ENCODE measurements at regions of chr12 and their contacts with region 1.

Region 1: GRCh38 chr12:12266873-12267741 is at the start of gene LRP6:
- DNase-seq: peak; percentile 92
- H3K4me3 Mint-ChIP-seq: peak within 1 kb of the TSS; percentile 94
- H3K27ac Mint-ChIP-seq: peak within 1 kb of the TSS; percentile 99
- H3K4me1 Mint-ChIP-seq: peaks cover 18% of the 10 kb centered on the region
- H3K27me3 Mint-ChIP-seq: no peaks in the 10 kb centered on the region
- CTCF ChIP-seq: no peak
- total RNA-seq, gene LRP6: 24.9 and 27.6 TPM in 2 replicates

Region 2: GRCh38 chr12:11981121-11981733 is 285.9 kb before region 1 on chr12:
- CTCF ChIA-PET with region 1: no interaction called
- POLR2A ChIA-PET with region 1: no interaction called
- intact Hi-C with region 1: no loop called
- DNase-seq: no peak
- H3K4me3 Mint-ChIP-seq: no peak overlapping the region
- H3K27ac Mint-ChIP-seq: no peak overlapping the region
- H3K4me1 Mint-ChIP-seq: peaks cover 5% of the 10 kb centered on the region
- H3K27me3 Mint-ChIP-seq: no peaks in the 10 kb centered on the region
- CTCF ChIP-seq: no peak

Region 3: GRCh38 chr12:12123036-12123604 is 144.0 kb before region 1 on chr12:
- CTCF ChIA-PET with region 1: no interaction called
- POLR2A ChIA-PET with region 1: interaction called, 5 read pairs
- intact Hi-C with region 1: loop called (anchors 10 kb)
- DNase-seq: no peak
- H3K4me3 Mint-ChIP-seq: no peak overlapping the region
- H3K27ac Mint-ChIP-seq: no peak overlapping the region
- H3K4me1 Mint-ChIP-seq: no peaks in the 10 kb centered on the region
- H3K27me3 Mint-ChIP-seq: no peaks in the 10 kb centered on the region
- CTCF ChIP-seq: no peak

Region 4: DNA sequence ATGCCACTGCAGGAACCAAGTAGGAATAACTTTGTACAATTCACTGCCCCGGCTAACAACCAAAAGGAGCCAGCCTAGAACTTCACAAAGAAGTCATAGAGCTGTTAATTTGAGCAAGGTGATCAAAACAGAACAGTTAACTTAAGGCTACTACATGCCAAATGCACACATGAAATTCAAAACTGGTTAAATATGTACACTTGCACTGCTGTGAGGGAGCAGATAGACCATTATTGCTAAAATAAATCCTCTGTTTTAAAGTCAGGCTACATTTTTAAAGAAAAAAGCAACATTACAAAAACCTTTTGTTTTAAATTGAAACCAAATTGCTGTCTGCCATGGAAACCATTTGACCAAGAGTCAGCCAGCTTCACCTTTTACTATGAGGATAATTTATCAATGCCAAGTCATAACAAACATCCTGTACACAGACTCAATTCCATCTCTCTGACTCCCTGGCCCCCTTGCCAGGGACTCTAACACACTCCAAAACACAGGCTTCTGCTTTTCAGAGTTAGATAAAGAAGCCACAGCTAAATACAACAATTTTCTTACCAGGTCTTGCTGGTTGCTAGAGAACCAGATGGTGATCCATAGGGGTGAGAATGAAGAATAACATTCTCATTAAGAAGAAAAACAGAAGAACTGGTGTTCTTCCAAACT is 84.3 kb before region 1 on chr12:
- CTCF ChIA-PET with region 1: no interaction called
- POLR2A ChIA-PET with region 1: interaction called, 13 read pairs
- intact Hi-C with region 1: no loop called
- DNase-seq: no peak
- H3K4me3 Mint-ChIP-seq: no peak overlapping the region
- H3K27ac Mint-ChIP-seq: no peak overlapping the region
- H3K4me1 Mint-ChIP-seq: peaks cover 14% of the 10 kb centered on the region
- H3K27me3 Mint-ChIP-seq: no peaks in the 10 kb centered on the region
- CTCF ChIP-seq: no peak

Region 5: DNA sequence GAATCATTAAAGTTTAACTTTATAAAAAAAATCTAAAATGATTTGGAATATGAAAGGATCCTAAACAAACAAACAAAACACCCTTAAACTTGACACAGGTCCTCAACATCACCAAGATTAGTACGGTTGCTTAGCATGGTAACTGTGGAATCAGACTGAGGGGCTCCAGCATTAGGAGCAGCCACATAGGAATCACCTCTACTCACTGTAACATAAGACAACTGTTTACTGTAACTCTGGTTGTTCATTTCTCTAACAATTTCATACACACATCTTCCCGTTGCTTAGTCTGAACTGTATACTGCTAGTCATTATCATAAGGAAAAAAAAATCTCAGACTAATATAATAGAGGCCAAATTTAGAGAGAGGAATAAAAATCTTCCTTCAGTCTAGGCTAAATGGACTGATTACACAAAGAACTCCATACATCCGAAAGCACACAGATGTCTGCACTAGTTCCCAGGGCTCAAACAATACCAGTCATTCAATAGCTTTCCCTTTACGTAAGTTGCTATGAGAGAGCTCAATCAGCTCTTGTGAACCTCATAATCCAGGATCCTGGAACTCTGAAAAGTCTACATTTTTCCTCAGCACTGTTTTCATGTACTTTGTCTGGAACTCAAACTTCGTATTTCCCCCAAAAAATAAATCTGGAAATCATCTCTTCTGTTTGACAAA is 26.3 kb before region 1 on chr12:
- CTCF ChIA-PET with region 1: interaction called, 7 read pairs
- POLR2A ChIA-PET with region 1: interaction called, 29 read pairs
- intact Hi-C with region 1: no loop called
- DNase-seq: no peak
- H3K4me3 Mint-ChIP-seq: no peak overlapping the region
- H3K27ac Mint-ChIP-seq: no peak overlapping the region
- H3K4me1 Mint-ChIP-seq: peaks cover 17% of the 10 kb centered on the region
- H3K27me3 Mint-ChIP-seq: no peaks in the 10 kb centered on the region
- CTCF ChIP-seq: no peak

Region 6: GRCh38 chr12:12327802-12328201 is 60.7 kb after region 1 on chr12:
- CTCF ChIA-PET with region 1: interaction called, 6 read pairs
- POLR2A ChIA-PET with region 1: interaction called, 3 read pairs
- intact Hi-C with region 1: loop called (anchors 5 kb)
- DNase-seq: peak; percentile 66
- H3K4me3 Mint-ChIP-seq: no peak overlapping the region
- H3K27ac Mint-ChIP-seq: no peak overlapping the region
- H3K4me1 Mint-ChIP-seq: peaks cover 6% of the 10 kb centered on the region
- H3K27me3 Mint-ChIP-seq: no peaks in the 10 kb centered on the region
- CTCF ChIP-seq: peak; percentile 59